ENCODE measurements at regions of chr17 and their contacts with region 1.

Region 1: DNA sequence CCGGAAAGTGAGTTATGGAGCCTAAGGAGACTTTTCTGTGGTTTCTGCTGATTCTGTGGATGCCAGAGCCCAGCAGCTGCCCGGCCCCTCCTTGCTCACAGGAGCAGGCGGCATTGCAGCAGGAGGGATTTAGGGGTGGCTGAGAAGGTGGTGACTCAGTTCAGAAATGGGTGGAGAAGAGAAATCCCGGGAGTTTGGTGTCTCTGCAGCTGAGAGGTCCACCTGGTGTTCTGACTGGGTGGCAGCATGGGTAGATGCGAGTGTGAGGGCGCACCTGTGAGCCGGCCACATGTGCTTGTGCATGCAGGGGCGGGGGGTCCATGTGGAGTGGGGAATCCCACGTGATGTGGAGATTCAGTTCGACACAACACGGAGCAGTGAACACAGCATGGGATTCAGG is 16.1 kb upstream of the SPPL2C start:
- DNase-seq: no peak
- ATAC-seq: no peak
- H3K4me3 Mint-ChIP-seq: no peak overlapping the region
- H3K27ac Mint-ChIP-seq: no peak overlapping the region
- H3K4me1 Mint-ChIP-seq: no peaks in the 10 kb centered on the region
- H3K27me3 Mint-ChIP-seq: no peaks in the 10 kb centered on the region
- CTCF ChIP-seq: no peak

Region 2: GRCh38 chr17:45648642-45649041 is 180.0 kb before region 1 on chr17:
- CTCF ChIA-PET with region 1: interaction called, 23 read pairs
- POLR2A ChIA-PET with region 1: no interaction called
- DNase-seq: peak; percentile 80
- ATAC-seq: peak; percentile 85
- H3K4me3 Mint-ChIP-seq: no peak overlapping the region
- H3K27ac Mint-ChIP-seq: no peak overlapping the region
- H3K4me1 Mint-ChIP-seq: peaks cover 16% of the 10 kb centered on the region
- H3K27me3 Mint-ChIP-seq: no peaks in the 10 kb centered on the region
- CTCF ChIP-seq: peak; percentile 70

Region 3: GRCh38 chr17:45666046-45666600 is 162.5 kb before region 1 on chr17:
- CTCF ChIA-PET with region 1: interaction called, 27 read pairs
- POLR2A ChIA-PET with region 1: no interaction called
- DNase-seq: peak; percentile 26
- ATAC-seq: peak; percentile 50
- H3K4me3 Mint-ChIP-seq: no peak overlapping the region
- H3K27ac Mint-ChIP-seq: no peak overlapping the region
- H3K4me1 Mint-ChIP-seq: no peaks in the 10 kb centered on the region
- H3K27me3 Mint-ChIP-seq: no peaks in the 10 kb centered on the region; the same call in 1 of the 2 replicates
- CTCF ChIP-seq: no peak

Region 4: GRCh38 chr17:45768000-45768399 is 60.6 kb before region 1 on chr17:
- CTCF ChIA-PET with region 1: interaction called, 19 read pairs
- POLR2A ChIA-PET with region 1: no interaction called
- DNase-seq: peak; percentile 51
- ATAC-seq: peak; percentile 80
- H3K4me3 Mint-ChIP-seq: no peak overlapping the region
- H3K27ac Mint-ChIP-seq: no peak overlapping the region
- H3K4me1 Mint-ChIP-seq: peaks cover 27% of the 10 kb centered on the region
- H3K27me3 Mint-ChIP-seq: no peaks in the 10 kb centered on the region
- CTCF ChIP-seq: no peak

Region 5: DNA sequence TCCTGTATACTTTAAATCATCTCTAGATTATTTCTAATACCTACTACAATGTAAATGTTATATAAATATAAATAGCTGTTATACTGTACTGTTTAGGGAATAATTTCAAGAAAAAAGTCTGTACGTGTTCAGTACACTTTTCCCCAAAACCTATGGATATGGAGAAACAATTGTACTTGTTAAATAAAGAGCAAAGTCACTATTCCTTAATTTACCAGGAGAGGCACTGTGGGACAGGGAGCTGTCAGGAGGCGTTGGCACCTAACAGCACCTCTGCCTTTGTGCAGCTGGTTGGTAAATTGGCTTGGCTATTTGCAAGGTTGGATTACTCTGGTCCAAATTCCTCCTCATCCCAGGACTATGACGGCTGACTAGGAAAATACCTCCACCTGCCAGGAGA is 16.5 kb before region 1 on chr17:
- CTCF ChIA-PET with region 1: interaction called, 17 read pairs
- POLR2A ChIA-PET with region 1: no interaction called
- DNase-seq: no peak
- ATAC-seq: peak; percentile 30
- H3K4me3 Mint-ChIP-seq: no peak overlapping the region
- H3K27ac Mint-ChIP-seq: no peak overlapping the region
- H3K4me1 Mint-ChIP-seq: peaks cover 14% of the 10 kb centered on the region
- H3K27me3 Mint-ChIP-seq: no peaks in the 10 kb centered on the region; the same call in 1 of the 2 replicates
- CTCF ChIP-seq: no peak

Region 6: GRCh38 chr17:45841883-45842525 is 13.4 kb after region 1 on chr17:
- CTCF ChIA-PET with region 1: interaction called, 11 read pairs
- POLR2A ChIA-PET with region 1: no interaction called
- DNase-seq: no peak
- ATAC-seq: no peak
- H3K4me3 Mint-ChIP-seq: no peak overlapping the region
- H3K27ac Mint-ChIP-seq: no peak overlapping the region
- H3K4me1 Mint-ChIP-seq: 0 out of 2 replicates have a peak, but pooled peaks cover 2% of the 10 kb centered on the region
- H3K27me3 Mint-ChIP-seq: no peaks in the 10 kb centered on the region; the same call in 1 of the 2 replicates
- CTCF ChIP-seq: no peak

Region 7: GRCh38 chr17:45852535-45853297 is 24.1 kb after region 1 on chr17:
- CTCF ChIA-PET with region 1: interaction called, 19 read pairs
- POLR2A ChIA-PET with region 1: no interaction called
- DNase-seq: peak; percentile 76
- ATAC-seq: peak; percentile 65
- H3K4me3 Mint-ChIP-seq: no peak overlapping the region
- H3K27ac Mint-ChIP-seq: no peak overlapping the region
- H3K4me1 Mint-ChIP-seq: no peaks in the 10 kb centered on the region
- H3K27me3 Mint-ChIP-seq: peaks cover 5% of the 10 kb centered on the region
- CTCF ChIP-seq: peak; percentile 89

Region 8: DNA sequence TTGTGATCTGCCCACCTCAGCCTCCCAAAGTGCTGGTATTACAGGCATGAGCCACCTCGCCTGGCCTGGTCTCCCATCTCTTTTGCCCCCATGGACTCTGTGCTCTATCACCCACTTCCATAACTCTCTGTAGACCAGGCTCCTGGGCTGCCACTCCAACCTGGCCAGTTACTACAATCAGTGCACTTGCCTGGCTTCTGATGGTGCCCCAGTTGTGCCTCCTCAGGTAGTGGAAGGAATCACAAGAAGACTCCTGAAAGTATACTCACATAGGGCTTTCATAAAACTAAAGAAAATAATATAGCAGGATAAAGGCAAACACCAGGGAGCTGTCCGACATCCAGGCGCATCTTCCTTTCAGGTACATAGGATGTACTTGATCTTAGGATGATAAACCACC is 57.5 kb after region 1 on chr17:
- CTCF ChIA-PET with region 1: no interaction called
- POLR2A ChIA-PET with region 1: no interaction called
- DNase-seq: no peak
- ATAC-seq: peak; percentile 41; the same call in 1 of the 2 replicates
- H3K4me3 Mint-ChIP-seq: no peak overlapping the region
- H3K27ac Mint-ChIP-seq: no peak overlapping the region
- H3K4me1 Mint-ChIP-seq: no peaks in the 10 kb centered on the region
- H3K27me3 Mint-ChIP-seq: peaks cover 19% of the 10 kb centered on the region
- CTCF ChIP-seq: no peak

Region 9: DNA sequence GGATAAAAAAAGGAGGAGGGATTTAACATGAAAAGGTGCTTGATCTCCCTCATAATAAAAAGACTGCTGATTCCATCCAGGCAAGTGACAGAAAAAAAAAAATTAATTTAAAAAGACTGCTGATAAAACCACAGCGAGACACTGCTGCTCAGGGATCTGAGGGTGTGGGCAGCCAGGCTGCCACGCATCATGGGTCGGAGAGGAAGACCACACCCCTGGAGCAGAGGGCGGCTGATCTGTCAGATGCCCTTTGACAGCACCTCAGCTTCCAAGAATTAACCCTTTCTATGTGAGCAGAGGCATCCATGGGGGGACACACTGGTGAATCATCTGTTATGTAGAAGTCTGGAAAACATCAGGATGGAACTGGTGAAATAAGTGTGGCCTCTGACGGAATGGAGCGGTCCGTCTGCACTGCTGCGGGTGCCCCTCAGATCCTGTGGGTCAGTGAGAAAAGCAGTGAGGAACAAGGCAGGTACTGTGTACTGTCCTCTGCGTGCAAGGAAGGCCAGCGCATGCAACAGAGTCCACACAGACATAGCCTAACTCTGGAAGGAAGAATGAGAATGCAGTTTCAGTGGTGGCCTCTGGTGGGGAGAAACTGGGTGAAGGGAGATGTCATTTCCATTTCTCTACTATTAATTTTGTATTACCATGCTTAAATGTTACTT is 85.6 kb after region 1 on chr17:
- CTCF ChIA-PET with region 1: no interaction called
- POLR2A ChIA-PET with region 1: no interaction called
- DNase-seq: no peak
- ATAC-seq: no peak
- H3K4me3 Mint-ChIP-seq: no peak overlapping the region
- H3K27ac Mint-ChIP-seq: no peak overlapping the region
- H3K4me1 Mint-ChIP-seq: no peaks in the 10 kb centered on the region
- H3K27me3 Mint-ChIP-seq: peaks cover 7% of the 10 kb centered on the region
- CTCF ChIP-seq: no peak